ENCODE measurements at regions of chr2 and their contacts with region 1.

Region 1: GRCh38 chr2:96868555-96869280 is 1.2 kb downstream of the SEMA4C start:
- DNase-seq: peak; percentile 85
- H3K4me3 ChIP-seq: peak overlapping the region; percentile 85 to 96
- H3K27ac ChIP-seq: peak overlapping the region; percentile 92 to 95
- H3K4me1 ChIP-seq: peaks cover 15% of the 10 kb centered on the region
- H3K27me3 ChIP-seq: no peaks in the 10 kb centered on the region
- CTCF ChIP-seq: peak; percentile 41 to 60 (median 48)
- POLR2A ChIP-seq: no peak

Region 2: DNA sequence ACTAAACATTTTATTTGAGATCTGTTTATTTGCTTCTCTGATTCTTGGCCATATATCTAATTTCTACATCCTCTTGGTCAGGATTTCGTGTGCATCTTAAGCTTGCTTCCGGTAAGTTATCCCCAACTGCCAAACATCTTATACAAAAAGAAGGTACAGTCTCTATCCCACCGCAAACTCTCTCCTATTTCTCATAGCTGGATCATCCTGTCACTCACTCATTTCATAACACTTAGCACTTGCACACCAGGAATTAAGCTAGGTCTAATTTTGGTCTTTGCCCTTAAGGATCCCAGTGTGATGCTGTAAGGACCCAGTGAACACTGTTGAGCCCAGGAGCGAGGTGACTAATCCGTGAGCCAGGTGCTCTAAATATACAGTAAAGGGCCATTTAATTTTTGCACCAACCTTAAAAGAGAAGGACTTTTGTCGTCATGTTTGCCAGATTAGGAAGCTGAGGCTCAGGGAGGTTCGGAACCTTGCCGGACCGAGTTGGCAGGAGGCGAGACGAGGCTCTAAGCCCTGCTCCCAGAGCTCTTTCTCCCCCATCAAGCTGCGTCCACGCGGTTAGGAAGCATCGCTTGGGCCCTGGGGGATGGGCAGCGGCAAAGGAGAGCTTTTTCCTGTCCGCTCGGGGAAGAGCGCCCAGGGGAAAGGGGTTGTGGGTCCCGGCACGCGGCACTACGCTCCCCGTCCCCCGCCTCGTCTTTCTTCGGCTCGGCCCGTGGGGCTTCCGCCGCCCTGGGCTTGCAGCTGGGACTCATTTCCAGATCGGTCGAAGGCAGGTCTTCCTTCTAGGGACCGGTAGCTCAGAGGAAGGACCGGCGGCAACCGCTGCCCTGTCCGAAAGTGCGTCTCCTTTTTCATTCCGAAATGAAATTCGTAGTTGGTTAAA is 547.7 kb before region 1 on chr2:
- intact Hi-C with region 1: no loop called
- DNase-seq: peak; percentile 43
- H3K4me3 ChIP-seq: peak overlapping the region; percentile 47 to 68
- H3K27ac ChIP-seq: peak overlapping the region in 1 of 2 donors; percentile 33
- H3K4me1 ChIP-seq: peaks cover 12% of the 10 kb centered on the region
- H3K27me3 ChIP-seq: no peaks in the 10 kb centered on the region
- CTCF ChIP-seq: no peak
- POLR2A ChIP-seq: no peak

Region 3: DNA sequence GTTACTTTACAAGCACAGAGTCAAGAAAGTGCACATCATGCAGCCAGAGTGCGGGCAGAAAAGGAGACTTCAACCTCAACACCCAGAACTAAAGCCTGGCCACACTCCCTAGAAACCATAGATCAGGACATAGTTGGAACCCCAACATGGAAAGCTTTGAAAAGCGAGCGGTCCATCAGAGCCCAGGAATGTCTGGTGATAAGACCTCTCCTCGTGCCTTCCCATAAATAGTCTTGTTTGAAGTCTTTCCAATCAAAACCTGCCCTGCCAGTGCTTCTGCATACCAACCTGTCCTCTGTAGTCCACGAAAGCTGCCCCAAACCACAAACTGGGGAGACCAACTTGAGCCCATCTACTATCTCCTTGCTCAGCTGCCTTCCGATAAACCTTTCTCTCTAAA is 419.1 kb before region 1 on chr2:
- intact Hi-C with region 1: no loop called
- DNase-seq: no peak
- H3K4me3 ChIP-seq: no peak overlapping the region
- H3K27ac ChIP-seq: no peak overlapping the region
- H3K4me1 ChIP-seq: no peaks in the 10 kb centered on the region
- H3K27me3 ChIP-seq: no peaks in the 10 kb centered on the region
- CTCF ChIP-seq: no peak
- POLR2A ChIP-seq: no peak

Region 4: GRCh38 chr2:96907115-96908041 is 38.7 kb after region 1 on chr2:
- intact Hi-C with region 1: loop called (anchors 5 kb)
- DNase-seq: peak; percentile 66
- H3K4me3 ChIP-seq: no peak overlapping the region
- H3K27ac ChIP-seq: peak overlapping the region; percentile 70 to 85
- H3K4me1 ChIP-seq: peaks cover 18% of the 10 kb centered on the region
- H3K27me3 ChIP-seq: no peaks in the 10 kb centered on the region
- CTCF ChIP-seq: no peak
- POLR2A ChIP-seq: no peak

Region 5: DNA sequence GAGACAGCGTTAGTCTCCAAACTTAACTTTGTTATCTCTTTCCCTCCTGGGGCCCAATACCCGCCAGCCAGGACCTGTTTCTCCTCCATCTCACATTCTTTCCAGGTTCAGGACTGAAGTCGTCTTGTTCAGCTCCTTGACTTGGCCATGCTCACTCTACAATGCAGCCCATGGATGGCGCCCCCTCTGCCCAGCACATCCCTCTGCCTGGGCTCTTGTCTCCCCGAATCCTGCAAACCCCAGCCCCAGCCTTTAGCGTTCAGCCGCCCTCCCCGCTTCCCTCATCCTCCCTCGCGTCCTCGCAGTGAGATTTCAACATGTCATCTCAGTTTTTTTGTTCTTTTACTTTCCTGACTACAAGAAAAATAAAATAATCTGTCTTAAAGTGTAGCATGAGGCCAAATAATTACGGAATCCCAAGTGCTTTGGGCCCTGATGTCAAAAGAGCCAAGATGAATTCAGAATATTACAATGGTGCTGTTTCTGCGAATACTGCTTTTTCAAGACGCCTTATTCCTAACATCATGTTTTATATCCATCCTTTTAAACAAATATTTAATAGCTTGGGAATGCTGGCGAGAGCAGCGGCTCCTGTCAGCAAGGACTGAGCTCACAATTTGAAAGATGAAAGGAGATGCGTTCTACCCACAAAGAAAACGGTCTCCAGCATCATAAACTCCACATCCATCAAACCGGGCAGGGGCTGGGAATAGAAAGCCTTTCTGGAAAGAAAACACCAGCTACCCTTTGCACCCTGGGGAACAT is 116.6 kb after region 1 on chr2:
- intact Hi-C with region 1: no loop called
- DNase-seq: no peak
- H3K4me3 ChIP-seq: peak overlapping the region in 1 of 2 donors; percentile 56
- H3K27ac ChIP-seq: no peak overlapping the region
- H3K4me1 ChIP-seq: no peaks in the 10 kb centered on the region
- H3K27me3 ChIP-seq: no peaks in the 10 kb centered on the region
- CTCF ChIP-seq: no peak
- POLR2A ChIP-seq: no peak